HEK293T (cell line): ENCODE measurements at regions of chr12 and their contacts with region 1.

Region 1: DNA sequence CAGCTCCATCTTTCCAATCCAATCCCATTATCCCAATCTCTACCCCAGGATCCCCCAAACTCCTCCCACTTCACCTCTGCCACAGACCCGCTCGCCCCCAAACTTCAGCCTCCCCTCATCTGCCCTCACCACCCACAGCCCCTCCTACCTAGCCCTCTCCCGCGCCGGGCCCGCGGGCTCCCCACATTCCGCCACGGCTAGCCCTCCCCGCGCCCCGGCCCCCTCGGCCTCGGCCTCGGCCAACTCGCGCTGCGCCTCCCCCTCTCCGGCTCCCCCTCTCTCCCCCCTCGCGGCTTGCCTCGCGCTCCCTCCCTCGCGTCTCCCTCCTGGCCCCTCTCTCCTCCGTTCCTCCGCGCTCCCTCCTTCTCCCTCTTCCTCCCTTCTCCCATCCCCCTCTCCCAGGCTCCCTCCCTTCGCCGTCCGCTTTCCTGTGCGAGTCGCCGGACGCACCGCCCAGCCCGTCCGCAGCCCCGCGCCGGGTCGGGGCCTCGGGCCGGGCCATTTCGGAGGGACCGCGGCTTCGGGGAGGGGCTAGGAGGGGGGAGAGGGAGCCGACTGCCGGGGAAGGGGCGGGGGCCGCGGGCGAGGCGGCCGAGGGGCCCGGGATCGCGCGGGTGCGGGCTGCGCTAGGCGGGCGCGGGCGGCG is at the start of gene ATN1:
- DNase-seq: peak; percentile 54

Region 2: GRCh38 chr12:6792522-6793201 is 134.8 kb before region 1 on chr12:
- CTCF ChIA-PET with region 1: no interaction called
- POLR2A ChIA-PET with region 1: no interaction called
- DNase-seq: no peak

Region 3: DNA sequence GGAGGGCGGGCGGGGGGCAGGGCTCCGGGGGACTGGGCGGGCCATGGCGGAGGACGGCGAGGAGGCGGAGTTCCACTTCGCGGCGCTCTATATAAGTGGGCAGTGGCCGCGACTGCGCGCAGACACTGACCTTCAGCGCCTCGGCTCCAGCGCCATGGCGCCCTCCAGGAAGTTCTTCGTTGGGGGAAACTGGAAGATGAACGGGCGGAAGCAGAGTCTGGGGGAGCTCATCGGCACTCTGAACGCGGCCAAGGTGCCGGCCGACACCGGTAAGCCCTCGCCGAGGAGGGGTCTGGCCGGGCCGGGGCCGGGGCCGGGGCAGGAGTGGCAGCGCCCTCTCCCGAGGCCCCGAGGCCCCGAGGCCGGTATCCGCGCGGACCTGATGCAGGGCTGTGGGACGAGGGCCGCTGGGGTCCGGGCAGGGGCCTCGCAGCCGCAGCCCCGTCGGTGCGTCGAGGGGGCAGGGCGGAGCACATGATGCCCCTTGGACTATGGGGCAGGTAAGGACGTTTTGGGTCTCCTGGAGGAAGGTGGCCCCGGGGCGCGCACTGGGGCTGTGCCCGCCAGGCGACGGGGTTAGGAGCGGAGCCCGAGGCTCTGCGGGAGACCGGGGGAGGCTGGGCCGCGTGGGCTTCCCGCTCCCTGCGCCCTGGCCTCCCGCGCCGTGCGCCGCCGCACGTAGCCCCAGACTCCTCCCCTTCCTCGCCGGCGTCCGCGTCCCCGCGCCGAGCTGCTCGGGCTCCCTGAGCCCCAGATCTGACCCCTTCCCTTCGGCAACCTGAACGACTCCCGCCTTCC is 59.9 kb before region 1 on chr12 and contains the start of gene TPI1:
- CTCF ChIA-PET with region 1: interaction called, 10 read pairs
- POLR2A ChIA-PET with region 1: interaction called, 32 read pairs
- DNase-seq: peak; percentile 91

Region 4: GRCh38 chr12:6890789-6891645 is 36.5 kb before region 1 on chr12:
- CTCF ChIA-PET with region 1: interaction called, 7 read pairs
- POLR2A ChIA-PET with region 1: interaction called, 12 read pairs
- DNase-seq: peak; percentile 97

Region 5: DNA sequence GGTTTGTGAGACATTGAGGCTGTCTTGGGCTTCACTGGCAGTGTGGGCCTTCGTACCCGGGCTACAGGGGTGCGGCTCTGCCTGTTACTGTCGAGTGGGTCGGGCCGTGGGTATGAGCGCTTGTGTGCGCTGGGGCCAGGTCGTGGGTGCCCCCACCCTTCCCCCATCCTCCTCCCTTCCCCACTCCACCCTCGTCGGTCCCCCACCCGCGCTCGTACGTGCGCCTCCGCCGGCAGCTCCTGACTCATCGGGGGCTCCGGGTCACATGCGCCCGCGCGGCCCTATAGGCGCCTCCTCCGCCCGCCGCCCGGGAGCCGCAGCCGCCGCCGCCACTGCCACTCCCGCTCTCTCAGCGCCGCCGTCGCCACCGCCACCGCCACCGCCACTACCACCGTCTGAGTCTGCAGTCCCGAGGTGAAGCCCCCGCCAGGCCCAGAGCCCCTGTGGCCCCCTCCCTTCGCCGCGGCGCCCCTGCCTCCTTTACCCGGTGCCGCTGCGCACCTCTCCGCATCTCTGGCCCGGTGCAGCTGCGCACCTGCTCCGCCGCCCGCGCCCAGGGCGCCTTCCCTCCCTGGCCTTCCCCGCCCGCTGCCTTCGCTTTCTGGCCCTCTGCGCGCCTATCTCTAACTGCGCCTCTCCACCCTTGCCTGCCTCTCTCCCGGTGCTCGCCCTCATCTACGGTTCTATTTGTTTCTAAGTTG is 13.1 kb before region 1 on chr12 and contains the start of gene ENO2:
- CTCF ChIA-PET with region 1: interaction called, 4 read pairs
- POLR2A ChIA-PET with region 1: interaction called, 33 read pairs
- DNase-seq: no peak

Region 6: GRCh38 chr12:6937481-6938297 is 10.2 kb after region 1 on chr12:
- CTCF ChIA-PET with region 1: interaction called, 15 read pairs
- POLR2A ChIA-PET with region 1: interaction called, 95 read pairs
- DNase-seq: peak; percentile 84

Region 7: DNA sequence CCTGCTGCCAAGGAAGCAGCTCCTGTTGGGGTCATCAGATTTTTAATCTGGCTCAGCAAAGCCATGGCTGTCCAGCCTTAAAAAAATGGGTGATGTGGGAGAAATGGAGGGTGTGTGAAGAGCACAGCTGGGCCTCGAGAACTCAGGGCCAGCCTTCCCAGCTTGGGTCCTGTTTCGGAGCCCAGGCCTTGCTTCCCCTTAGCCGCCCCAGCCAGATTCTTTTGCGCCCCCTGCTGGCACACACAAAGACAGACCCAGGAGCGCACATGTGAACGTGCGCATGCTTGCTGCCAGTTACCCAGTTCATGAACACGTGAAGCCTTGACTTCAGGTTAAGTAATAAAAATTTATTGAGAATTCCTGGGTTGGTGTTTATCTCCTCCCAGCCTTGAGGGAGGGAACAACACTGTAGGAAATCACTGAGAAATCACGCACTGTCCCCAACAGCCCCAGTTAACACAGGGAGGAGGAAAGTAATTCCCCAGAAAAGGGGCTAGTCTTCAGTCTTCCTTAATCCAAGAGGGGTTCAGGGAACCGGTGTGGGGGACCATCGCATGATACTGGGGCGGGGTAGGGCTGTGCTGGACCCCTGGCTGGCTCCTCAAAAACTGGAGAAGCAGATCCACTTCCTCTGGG is 37.6 kb after region 1 on chr12:
- CTCF ChIA-PET with region 1: interaction called, 9 read pairs
- POLR2A ChIA-PET with region 1: interaction called, 32 read pairs
- DNase-seq: peak; percentile 81

Region 8: DNA sequence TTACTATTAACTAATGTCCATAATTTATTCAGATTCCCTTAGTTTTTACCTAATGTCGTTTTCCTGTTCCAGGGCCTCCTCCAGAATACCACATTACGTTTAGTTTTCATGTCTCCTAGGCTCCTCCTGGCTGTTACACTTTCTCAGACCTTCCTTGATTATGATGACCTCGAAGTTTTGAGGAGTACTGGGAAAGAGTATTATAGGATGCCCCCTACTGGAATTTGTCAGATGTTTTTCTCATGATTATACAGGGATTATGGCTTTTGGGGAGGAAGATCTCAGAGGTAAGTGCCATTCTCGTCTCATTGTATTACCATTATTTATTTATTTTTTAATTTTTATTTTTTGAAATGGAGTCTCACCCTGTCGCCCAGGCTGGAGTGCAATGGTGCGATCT is 115.3 kb after region 1 on chr12:
- CTCF ChIA-PET with region 1: no interaction called
- POLR2A ChIA-PET with region 1: no interaction called
- DNase-seq: peak; percentile 55